Sigmoid colon (tissue), 7 donors: ENCODE measurements at regions of chr15 and their contacts with region 1.

Region 1: DNA sequence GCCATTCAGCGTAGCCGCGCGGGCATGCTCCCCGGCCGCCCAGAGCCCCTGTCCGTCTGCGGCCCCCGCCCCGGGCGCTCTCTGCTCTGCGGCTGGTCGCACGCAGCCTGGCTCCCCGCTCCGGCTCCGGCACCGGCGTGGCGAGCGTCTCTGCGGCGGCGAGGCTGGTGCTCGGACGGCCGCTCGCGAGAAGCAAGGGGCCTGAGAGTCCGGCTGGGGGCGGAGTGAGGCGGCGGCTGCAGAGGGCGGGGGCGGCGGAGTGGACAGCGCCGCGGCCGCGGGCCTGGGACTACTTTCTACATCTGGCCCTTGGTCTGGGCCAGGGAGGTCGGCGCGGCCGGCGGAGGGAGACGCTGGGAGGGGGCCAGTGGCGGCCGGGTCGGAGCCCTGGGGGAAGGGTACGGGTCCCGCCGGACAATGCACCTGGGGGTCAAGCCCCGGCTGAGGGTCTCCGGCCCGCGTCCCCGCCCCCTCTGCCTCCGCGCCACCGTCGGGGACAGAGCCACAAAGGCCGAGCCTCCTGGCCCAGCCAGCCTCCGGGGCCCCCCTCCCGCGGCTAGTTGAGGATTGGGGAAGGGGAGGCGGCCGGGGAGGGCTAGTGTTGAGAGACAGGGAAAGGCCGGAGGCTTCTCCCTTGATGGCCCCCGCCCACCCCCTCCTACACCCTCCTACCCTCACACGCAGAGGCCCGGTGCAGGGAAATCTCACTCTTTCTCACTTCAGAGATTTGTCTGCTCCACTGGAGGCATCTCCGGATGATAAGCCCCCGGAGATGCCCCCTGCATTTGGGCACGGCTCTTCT is at the start of gene PRTG:
- DNase-seq: peak; percentile 81
- H3K4me3 ChIP-seq: peak within 1 kb of the TSS; percentile 45 to 80 (median 74)
- H3K27ac ChIP-seq: peak within 1 kb of the TSS; percentile 65 to 72 (median 71)
- H3K4me1 ChIP-seq: peaks cover 0 to 40% (median 30%) of the 10 kb centered on the region in 4 donors
- H3K27me3 ChIP-seq: peaks cover 7 to 63% (median 23%) of the 10 kb centered on the region in 3 donors
- CTCF ChIP-seq: no peak
- EP300 ChIP-seq: no peak
- POLR2A ChIP-seq: no peak
- total RNA-seq, gene PRTG: 1.3 to 5.3 (median 2.2) TPM

Region 2: DNA sequence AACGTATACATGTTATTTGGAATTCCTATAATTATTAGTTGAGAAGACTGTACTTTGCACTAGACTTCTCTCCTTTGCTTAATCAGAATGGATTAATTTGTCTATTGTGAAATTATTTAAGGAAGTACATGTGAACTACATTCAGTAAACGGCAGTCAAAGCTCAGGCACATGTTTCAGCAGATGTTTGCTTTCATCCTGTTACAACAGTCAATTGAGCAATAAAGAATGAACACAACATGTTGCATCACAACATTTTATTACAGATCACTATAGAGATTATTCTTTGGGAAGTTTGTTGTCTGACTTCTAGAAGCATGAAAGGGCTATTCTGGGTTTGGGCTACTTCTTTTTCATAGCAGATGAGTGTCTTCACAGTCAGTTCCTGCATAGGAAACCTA is 492.7 kb before region 1 on chr15:
- intact Hi-C with region 1: no loop called
- DNase-seq: no peak
- H3K4me3 ChIP-seq: no peak overlapping the region
- H3K27ac ChIP-seq: peak overlapping the region in 3 of 4 donors; percentile 16 to 53 (median 30)
- H3K4me1 ChIP-seq: peaks cover 0 to 8% (median 0%) of the 10 kb centered on the region in 4 donors
- H3K27me3 ChIP-seq: no peaks in the 10 kb centered on the region
- CTCF ChIP-seq: no peak
- EP300 ChIP-seq: peak in 1 of 4 donors; percentile 33
- POLR2A ChIP-seq: no peak

Region 3: GRCh38 chr15:55823191-55823670 is 80.1 kb after region 1 on chr15:
- intact Hi-C with region 1: loop called (anchors 5 kb)
- DNase-seq: no peak
- H3K4me3 ChIP-seq: no peak overlapping the region
- H3K27ac ChIP-seq: peak overlapping the region; percentile 14 to 58 (median 56)
- H3K4me1 ChIP-seq: peaks cover 0 to 17% (median 15%) of the 10 kb centered on the region in 4 donors
- H3K27me3 ChIP-seq: no peaks in the 10 kb centered on the region
- CTCF ChIP-seq: no peak
- EP300 ChIP-seq: no peak
- POLR2A ChIP-seq: no peak